Spleen (tissue), 13 donors: ENCODE measurements at regions of chr4 and their contacts with region 1.

Region 1: GRCh38 chr4:7802093-7802726 is 137.5 kb downstream of the AFAP1 start:
- DNase-seq: peak; percentile 87
- H3K4me3 ChIP-seq: no peak overlapping the region
- H3K27ac ChIP-seq: no peak overlapping the region
- H3K4me1 ChIP-seq: peaks cover 0 to 37% (median 16%) of the 10 kb centered on the region in 6 donors
- H3K27me3 ChIP-seq: peaks cover 0 to under 1% (median 0%) of the 10 kb centered on the region in 7 donors
- CTCF ChIP-seq: peak; percentile 48 to 86 (median 78)
- POLR2A ChIP-seq: no peak

Region 2: GRCh38 chr4:7192252-7193029 is 609.8 kb before region 1 on chr4 and contains the start of gene SORCS2:
- intact Hi-C with region 1: loop called (anchors 5 kb)
- DNase-seq: peak; percentile 81
- H3K4me3 ChIP-seq: peak within 1 kb of the TSS in 2 of 8 donors; percentile 16 to 61
- H3K27ac ChIP-seq: no peak within 1 kb of the TSS
- H3K4me1 ChIP-seq: peaks cover 5 to 21% (median 13%) of the 10 kb centered on the region in 6 donors
- H3K27me3 ChIP-seq: peaks cover 0 to 100% (median 44%) of the 10 kb centered on the region in 7 donors
- CTCF ChIP-seq: peak in 9 of 11 experiments; percentile 23 to 78 (median 70)
- POLR2A ChIP-seq: no peak
- total RNA-seq, gene SORCS2: 0.33 to 1.6 (median 0.61) TPM

Region 3: GRCh38 chr4:7238300-7238960 is 563.8 kb before region 1 on chr4:
- intact Hi-C with region 1: no loop called
- DNase-seq: no peak
- H3K4me3 ChIP-seq: no peak overlapping the region
- H3K27ac ChIP-seq: no peak overlapping the region
- H3K4me1 ChIP-seq: peaks cover 0 to 6% (median 0%) of the 10 kb centered on the region in 6 donors
- H3K27me3 ChIP-seq: peaks cover 0 to 91% (median under 1%) of the 10 kb centered on the region in 7 donors
- CTCF ChIP-seq: no peak
- POLR2A ChIP-seq: no peak

Region 4: GRCh38 chr4:7988437-7988836 is 186.2 kb after region 1 on chr4:
- intact Hi-C with region 1: loop called (anchors 2 kb)
- DNase-seq: no peak
- H3K4me3 ChIP-seq: no peak overlapping the region
- H3K27ac ChIP-seq: no peak overlapping the region
- H3K4me1 ChIP-seq: peaks cover 4 to 28% (median 18%) of the 10 kb centered on the region in 6 donors
- H3K27me3 ChIP-seq: peaks cover 0 to 15% (median 0%) of the 10 kb centered on the region in 7 donors
- CTCF ChIP-seq: no peak
- POLR2A ChIP-seq: no peak

Region 5: GRCh38 chr4:8128100-8128856 is 326.1 kb after region 1 on chr4:
- intact Hi-C with region 1: no loop called
- DNase-seq: no peak
- H3K4me3 ChIP-seq: peak overlapping the region in 1 of 8 donors; percentile 48
- H3K27ac ChIP-seq: peak overlapping the region; percentile 35 to 85 (median 76)
- H3K4me1 ChIP-seq: peaks cover 25 to 95% (median 64%) of the 10 kb centered on the region in 6 donors
- H3K27me3 ChIP-seq: no peaks in the 10 kb centered on the region
- CTCF ChIP-seq: no peak
- POLR2A ChIP-seq: no peak

Region 6: DNA sequence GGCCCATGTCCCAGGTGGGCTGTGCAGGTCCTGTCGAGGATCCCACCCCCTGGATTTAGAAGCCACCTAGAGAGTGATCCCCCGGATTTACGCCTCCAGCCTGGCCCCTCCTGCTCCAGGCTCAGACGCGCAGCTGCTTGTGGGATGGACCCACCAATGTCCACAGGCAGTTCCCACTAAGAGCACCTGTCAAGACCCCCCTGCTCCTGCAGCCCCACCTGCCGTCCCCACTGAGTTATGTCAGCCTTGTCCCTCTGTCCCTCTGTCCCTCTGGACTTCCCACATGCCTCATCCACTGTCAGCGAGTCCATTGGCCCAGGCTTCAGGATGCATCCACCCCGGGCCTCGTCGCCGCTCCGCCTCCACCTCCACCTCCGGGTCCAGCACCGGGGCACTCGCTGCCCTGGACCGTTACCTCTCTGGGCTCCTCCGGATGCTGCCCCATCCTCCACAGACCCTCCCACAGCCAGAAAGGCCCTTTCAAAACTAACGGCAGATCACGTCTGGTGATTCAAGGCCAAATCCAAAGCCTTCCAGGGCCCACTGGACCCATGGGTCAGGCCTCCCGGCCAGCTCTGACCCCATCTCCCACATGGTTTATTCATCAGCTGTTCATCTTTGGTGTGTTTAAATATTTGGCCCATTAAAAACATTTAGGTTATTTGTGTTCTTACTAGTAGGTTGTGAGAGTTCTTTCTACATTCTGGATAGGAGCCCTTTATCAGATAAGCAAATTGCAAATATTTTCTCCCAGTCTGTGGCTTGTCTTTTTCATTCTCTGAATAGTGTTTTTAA is 495.7 kb after region 1 on chr4:
- intact Hi-C with region 1: no loop called
- DNase-seq: peak; percentile 68
- H3K4me3 ChIP-seq: no peak overlapping the region
- H3K27ac ChIP-seq: no peak overlapping the region
- H3K4me1 ChIP-seq: no peaks in the 10 kb centered on the region
- H3K27me3 ChIP-seq: peaks cover 0 to 4% (median 0%) of the 10 kb centered on the region in 7 donors
- CTCF ChIP-seq: no peak
- POLR2A ChIP-seq: no peak

Region 7: GRCh38 chr4:8403173-8403753 is 601.1 kb after region 1 on chr4:
- intact Hi-C with region 1: no loop called
- DNase-seq: peak; percentile 91
- H3K4me3 ChIP-seq: no peak overlapping the region
- H3K27ac ChIP-seq: peak overlapping the region in 2 of 8 donors; percentile 28 to 32
- H3K4me1 ChIP-seq: peaks cover 0 to 20% (median 12%) of the 10 kb centered on the region in 6 donors
- H3K27me3 ChIP-seq: no peaks in the 10 kb centered on the region
- CTCF ChIP-seq: peak; percentile 75 to 94 (median 87)
- POLR2A ChIP-seq: no peak